ENCODE measurements at regions of chr3 and their contacts with region 1.

Region 1: GRCh38 chr3:134485718-134486576 is at the starts of genes ANAPC13 and CEP63:
- DNase-seq: peak; percentile 70 to 99 (median 93)
- ATAC-seq: peak; percentile 80 to 85
- H3K4me3 Mint-ChIP-seq: peak within 1 kb of the TSS; percentile 96 to 100 (median 100)
- H3K27ac Mint-ChIP-seq: peak within 1 kb of the TSS; percentile 99 to 100 (median 99)
- H3K4me1 Mint-ChIP-seq: peaks cover 23 to 75% (median 67%) of the 10 kb centered on the region in 4 donors
- H3K27me3 Mint-ChIP-seq: no peaks in the 10 kb centered on the region
- polyA plus RNA-seq, gene ANAPC13: 88.9 to 96.1 (median 90.5) TPM
- polyA plus RNA-seq, gene CEP63: 16.2 to 32.2 (median 26.0) TPM

Region 2: DNA sequence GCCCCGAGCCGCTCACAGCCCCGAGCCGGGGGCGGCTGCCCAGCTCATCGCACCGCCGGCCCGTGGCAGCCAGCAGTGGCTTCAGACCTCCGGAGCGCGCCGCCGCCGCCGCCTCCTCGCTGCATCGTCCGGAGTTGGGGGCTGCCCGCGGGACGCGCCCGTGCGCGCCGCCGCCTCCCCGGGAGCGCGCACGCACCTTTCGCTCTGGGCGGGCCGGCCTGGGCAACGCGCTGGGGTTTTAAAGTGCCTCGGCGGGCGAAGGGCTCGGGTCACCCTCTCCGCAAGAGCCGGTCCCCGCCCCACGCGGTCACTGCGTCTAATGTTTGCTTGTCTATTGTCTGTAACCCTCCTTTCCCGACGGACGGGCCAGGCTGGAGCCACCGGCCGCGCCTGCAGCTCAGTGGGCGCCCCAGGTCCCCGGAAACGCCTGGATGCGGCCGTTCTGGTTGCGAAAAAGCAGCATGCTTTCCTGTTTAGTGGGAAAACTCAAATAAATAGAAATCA is 235.2 kb before region 1 on chr3 and contains the start of gene RYK:
- POLR2A ChIA-PET with region 1: interaction called, 15 read pairs
- DNase-seq: peak; percentile 62 to 84 (median 76)
- ATAC-seq: peak; percentile 75 to 77
- H3K4me3 Mint-ChIP-seq: peak within 1 kb of the TSS; percentile 91 to 98 (median 94)
- H3K27ac Mint-ChIP-seq: peak within 1 kb of the TSS; percentile 92 to 97 (median 94)
- H3K4me1 Mint-ChIP-seq: peaks cover 28 to 61% (median 53%) of the 10 kb centered on the region in 4 donors
- H3K27me3 Mint-ChIP-seq: no peaks in the 10 kb centered on the region
- polyA plus RNA-seq, gene RYK: 6.3 to 15.6 (median 9.6) TPM

Region 3: DNA sequence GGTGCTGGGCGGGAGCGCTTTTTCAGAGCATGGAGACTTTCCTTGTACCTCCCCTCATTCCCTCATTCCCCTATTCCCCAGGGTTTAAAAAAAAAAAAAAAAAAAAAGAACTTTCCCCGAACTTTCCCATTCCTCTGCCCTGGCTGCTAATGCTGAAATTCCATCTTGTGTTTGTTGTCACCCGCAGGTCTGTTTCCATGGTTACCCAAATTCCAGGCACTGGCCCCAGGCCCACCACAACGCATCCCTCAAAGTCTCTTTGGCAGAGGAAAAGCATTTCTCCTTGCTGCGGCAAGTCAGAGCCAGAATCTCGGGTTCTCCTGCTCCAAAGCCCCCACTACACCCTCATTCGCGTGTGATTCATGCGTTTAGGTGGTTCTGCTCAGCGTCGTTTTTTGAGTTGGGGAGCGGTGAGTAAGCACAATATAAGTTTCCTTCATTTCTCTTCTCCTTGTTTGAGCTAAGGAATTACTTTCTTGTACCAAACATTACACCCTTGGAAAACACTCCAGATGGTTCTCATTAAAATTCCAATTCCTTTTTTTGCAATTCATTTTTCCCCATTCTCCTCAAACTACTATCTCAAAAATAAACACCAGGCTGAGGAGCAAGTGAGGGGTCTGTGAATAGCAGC is 21.8 kb before region 1 on chr3:
- POLR2A ChIA-PET with region 1: no interaction called
- DNase-seq: no peak
- ATAC-seq: no peak
- H3K4me3 Mint-ChIP-seq: no peak overlapping the region
- H3K27ac Mint-ChIP-seq: no peak overlapping the region
- H3K4me1 Mint-ChIP-seq: no peaks in the 10 kb centered on the region
- H3K27me3 Mint-ChIP-seq: peaks cover 2 to 11% (median 9%) of the 10 kb centered on the region in 5 donors